Psoas muscle (tissue), 8 donors: ENCODE measurements at regions of chr5 and their contacts with region 1.

Region 1: GRCh38 chr5:176415952-176416924 is at the start of gene CLTB:
- DNase-seq: peak; percentile 95 to 96
- ATAC-seq: peak; percentile 89 to 94 (median 92)
- H3K4me3 ChIP-seq: peak within 1 kb of the TSS; percentile 96
- H3K27ac ChIP-seq: peak within 1 kb of the TSS; percentile 100
- H3K4me1 ChIP-seq: peaks cover 42% of the 10 kb centered on the region
- H3K27me3 ChIP-seq: no peaks in the 10 kb centered on the region
- CTCF ChIP-seq: peak; percentile 80
- total RNA-seq, gene CLTB: 162 to 223 (median 217) TPM

Region 2: DNA sequence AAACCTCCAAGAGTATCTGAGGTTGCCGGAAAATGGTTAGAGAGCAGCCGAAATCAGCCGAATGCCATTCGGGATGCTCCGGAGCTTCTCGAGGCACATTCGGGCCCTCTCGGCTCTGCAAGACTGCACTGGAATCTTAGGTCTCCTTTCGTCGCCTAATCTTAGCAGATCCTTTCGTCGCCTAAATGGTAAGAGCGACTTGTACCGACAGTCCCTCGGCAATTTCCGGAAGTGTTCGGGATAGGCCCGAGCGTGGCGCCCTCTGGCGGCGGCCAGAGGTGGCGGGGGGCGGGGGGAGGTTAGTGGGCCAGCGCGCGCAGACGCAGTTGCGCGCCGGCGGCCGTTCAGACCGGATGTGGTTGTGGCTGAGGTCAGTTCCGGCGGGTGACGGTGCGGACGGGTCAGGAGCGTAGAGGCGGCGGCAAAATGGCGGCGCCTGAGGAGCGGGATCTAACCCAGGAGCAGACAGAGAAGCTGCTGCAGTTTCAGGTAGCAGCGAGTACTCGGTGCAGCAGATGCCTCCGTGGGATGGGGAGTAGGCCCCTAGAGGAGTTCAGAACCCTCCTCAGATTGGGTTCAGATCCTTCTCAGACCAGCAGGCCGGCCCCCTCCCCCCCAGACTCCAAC is 31.9 kb after region 1 on chr5 and contains the start of gene FAF2:
- intact Hi-C with region 1: loop called (anchors 1 to 2 kb)
- DNase-seq: peak; percentile 95 to 98
- ATAC-seq: peak; percentile 96 to 98 (median 97)
- H3K4me3 ChIP-seq: peak within 1 kb of the TSS; percentile 91
- H3K27ac ChIP-seq: peak within 1 kb of the TSS; percentile 97
- H3K4me1 ChIP-seq: peaks cover 27% of the 10 kb centered on the region
- H3K27me3 ChIP-seq: no peaks in the 10 kb centered on the region
- CTCF ChIP-seq: peak; percentile 94
- total RNA-seq, gene FAF2: 11.0 to 22.8 (median 14.4) TPM

Region 3: GRCh38 chr5:176537608-176538504 is 121.6 kb after region 1 on chr5:
- intact Hi-C with region 1: loop called (anchors 2 to 10 kb)
- DNase-seq: peak; percentile 98 to 99
- ATAC-seq: peak; percentile 85 to 86 (median 86)
- H3K4me3 ChIP-seq: peak overlapping the region; percentile 77
- H3K27ac ChIP-seq: peak overlapping the region; percentile 96
- H3K4me1 ChIP-seq: peaks cover 39% of the 10 kb centered on the region
- H3K27me3 ChIP-seq: no peaks in the 10 kb centered on the region
- CTCF ChIP-seq: no peak

Region 4: DNA sequence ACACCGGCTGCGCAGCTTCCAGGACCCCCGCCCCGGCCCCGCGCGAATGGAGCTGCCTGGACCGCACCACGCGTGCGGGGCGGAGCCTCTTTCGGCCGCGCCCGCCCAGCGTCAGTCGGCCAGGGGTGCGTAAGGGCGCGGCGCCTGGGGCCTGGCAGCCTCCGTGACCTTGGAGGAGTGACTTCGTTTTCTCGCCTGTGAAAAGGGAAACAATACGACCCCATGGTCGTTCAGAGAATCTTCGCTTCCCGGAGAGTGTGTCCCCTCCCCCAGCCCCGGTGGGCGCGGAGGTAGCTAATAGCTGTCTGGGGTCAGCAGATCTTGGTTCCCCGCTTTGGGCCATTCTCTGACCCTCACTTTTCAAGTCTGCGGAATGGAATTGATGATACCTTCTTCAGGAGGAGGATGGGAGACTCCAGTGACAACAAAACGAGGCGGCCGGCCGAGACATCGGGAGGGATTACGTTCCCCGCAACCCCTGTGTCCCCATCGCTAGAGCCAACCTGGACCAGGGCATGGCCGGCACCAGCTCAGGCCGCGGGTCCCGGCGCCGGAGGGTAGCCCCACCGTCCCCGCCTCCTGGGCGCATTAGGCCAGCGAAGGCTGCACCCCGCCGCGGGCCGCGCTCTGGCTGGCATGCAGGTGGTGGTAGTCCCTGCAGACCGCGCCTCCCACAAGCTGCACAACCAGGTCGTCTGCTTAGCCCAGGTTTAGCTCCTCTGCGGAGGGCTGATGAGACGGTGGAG is 127.4 kb after region 1 on chr5:
- intact Hi-C with region 1: loop called (anchors 2 to 10 kb)
- DNase-seq: peak; percentile 79 to 87
- ATAC-seq: peak; percentile 87 to 93 (median 90)
- H3K4me3 ChIP-seq: peak overlapping the region; percentile 76
- H3K27ac ChIP-seq: peak overlapping the region; percentile 80
- H3K4me1 ChIP-seq: peaks cover 13% of the 10 kb centered on the region
- H3K27me3 ChIP-seq: no peaks in the 10 kb centered on the region
- CTCF ChIP-seq: no peak